Endothelial cell of umbilical vein (primary cell): ENCODE measurements at regions of chr17 and their contacts with region 1.

Region 1: DNA sequence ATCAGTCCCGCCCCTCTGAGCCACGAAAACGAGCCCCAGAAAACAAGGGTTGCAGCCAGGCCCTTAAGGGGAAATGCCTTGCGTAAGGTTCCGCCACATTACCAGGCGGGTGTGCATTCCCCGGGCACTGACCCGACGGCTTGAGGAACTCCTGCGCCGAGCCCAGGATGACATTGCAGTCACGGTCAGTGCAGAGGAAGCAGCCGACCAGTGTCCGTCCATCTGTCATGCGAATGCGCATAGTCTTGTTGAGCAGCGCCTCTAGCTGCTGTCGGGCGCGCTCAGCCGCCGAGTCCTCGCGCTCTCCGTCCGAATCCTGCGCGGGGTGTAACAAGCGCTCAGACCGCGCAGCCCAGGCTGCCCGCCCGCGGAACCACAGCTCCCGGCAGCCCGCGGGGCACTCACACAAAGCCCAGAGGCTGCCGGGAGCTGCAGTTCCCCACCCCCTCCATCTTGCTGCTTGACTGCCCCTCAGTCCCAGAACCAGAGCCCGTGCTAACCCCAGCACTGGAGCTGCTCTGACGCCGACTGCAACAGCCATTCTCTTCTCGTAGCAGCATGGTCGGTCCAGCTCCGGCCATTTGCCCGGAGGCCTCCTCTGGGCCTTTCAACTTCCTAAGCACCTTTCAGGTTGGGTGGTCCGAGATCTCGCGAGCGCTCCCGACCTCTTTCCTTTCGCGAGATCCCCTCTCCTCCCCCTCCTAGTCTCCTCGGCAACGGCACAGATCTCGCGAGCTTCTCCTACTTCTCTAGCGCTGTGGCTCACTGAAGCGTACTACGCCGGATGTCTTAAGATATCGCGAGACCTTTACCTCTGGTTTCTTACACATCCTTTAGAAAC is at the start of gene NAA38:
- DNase-seq: peak; percentile 99
- H3K4me3 ChIP-seq: peak within 1 kb of the TSS; percentile 53 to 78 (median 54)
- H3K27ac ChIP-seq: peak within 1 kb of the TSS; percentile 96
- H3K4me1 ChIP-seq: peaks cover 35% of the 10 kb centered on the region
- H3K27me3 ChIP-seq: no peaks in the 10 kb centered on the region
- CTCF ChIP-seq: peak; percentile 17 to 34
- POLR2A ChIP-seq: peak; percentile 84
- total RNA-seq, gene NAA38: 119 TPM in 2 replicates

Region 2: DNA sequence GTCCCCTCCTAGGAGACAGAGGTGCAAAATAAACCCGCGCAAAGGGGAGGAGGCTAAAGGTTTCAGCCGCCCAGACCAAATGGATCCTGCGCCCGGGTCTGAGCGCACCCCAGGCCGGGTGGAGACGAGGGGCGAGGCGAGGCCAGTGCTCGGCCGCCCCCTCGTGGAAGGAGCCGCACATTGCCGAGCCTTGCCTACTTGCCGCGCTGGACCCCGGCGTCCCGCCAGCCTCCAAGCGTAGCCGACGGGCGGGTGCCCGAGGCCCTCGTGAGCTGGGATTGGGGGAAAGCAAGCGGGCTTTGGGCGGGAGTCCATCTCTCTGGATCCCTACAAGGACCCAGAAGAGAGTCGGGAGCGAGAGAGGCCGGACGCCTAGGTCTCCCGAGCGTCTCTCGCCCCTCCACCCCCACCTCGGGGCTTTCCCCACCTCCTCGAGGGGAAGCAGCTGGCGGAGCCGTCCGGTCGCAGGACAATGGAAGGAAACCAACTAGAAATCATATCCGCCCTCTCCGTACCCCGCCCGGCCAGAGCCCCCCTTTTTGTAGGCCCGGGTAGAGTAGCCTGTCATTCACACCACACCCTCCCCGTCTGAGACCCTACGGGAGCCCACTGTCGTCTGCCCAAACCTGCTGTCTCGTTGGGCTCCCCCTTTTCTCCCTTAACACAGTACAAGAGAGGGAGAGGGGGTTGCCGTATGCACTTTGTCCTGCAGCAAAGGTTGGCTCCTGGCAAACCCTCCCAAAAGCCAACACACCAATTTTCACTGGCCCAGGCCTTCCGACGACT is 834.9 kb before region 1 on chr17:
- CTCF ChIA-PET with region 1: no interaction called
- POLR2A ChIA-PET with region 1: no interaction called
- dilution Hi-C with region 1: no loop called
- intact Hi-C with region 1: loop called (anchors 10 kb)
- DNase-seq: peak; percentile 97
- H3K4me3 ChIP-seq: peak overlapping the region in 2 of 3 experiments; percentile 59 to 90
- H3K27ac ChIP-seq: peak overlapping the region; percentile 96
- H3K4me1 ChIP-seq: peaks cover 58% of the 10 kb centered on the region
- H3K27me3 ChIP-seq: no peaks in the 10 kb centered on the region
- CTCF ChIP-seq: peak; percentile 97 to 99
- POLR2A ChIP-seq: peak; percentile 66

Region 3: GRCh38 chr17:7740481-7741001 is 116.6 kb before region 1 on chr17:
- CTCF ChIA-PET with region 1: interaction called, 6 read pairs
- POLR2A ChIA-PET with region 1: no interaction called
- dilution Hi-C with region 1: no loop called
- intact Hi-C with region 1: loop called (anchors 1 kb)
- DNase-seq: no peak
- H3K4me3 ChIP-seq: no peak overlapping the region
- H3K27ac ChIP-seq: no peak overlapping the region
- H3K4me1 ChIP-seq: peaks cover 7% of the 10 kb centered on the region
- H3K27me3 ChIP-seq: peaks cover 6 to 7% of the 10 kb centered on the region in 2 experiments
- CTCF ChIP-seq: no peak
- POLR2A ChIP-seq: no peak

Region 4: GRCh38 chr17:7844292-7845154 is 12.6 kb before region 1 on chr17:
- CTCF ChIA-PET with region 1: interaction called, 7 read pairs
- POLR2A ChIA-PET with region 1: interaction called, 12 read pairs
- dilution Hi-C with region 1: no loop called
- intact Hi-C with region 1: loop called (anchors 1 kb)
- DNase-seq: peak; percentile 92
- H3K4me3 ChIP-seq: peak overlapping the region; percentile 45 to 71 (median 60)
- H3K27ac ChIP-seq: peak overlapping the region; percentile 99
- H3K4me1 ChIP-seq: peaks cover 14% of the 10 kb centered on the region
- H3K27me3 ChIP-seq: no peaks in the 10 kb centered on the region
- CTCF ChIP-seq: no peak
- POLR2A ChIP-seq: peak; percentile 52

Region 5: GRCh38 chr17:7931709-7932482 is 74.8 kb after region 1 on chr17 and contains the starts of genes CNTROB and TRAPPC1:
- CTCF ChIA-PET with region 1: interaction called, 7 read pairs
- POLR2A ChIA-PET with region 1: no interaction called
- dilution Hi-C with region 1: no loop called
- intact Hi-C with region 1: loop called (anchors 1 kb)
- DNase-seq: peak; percentile 99
- H3K4me3 ChIP-seq: peak within 1 kb of the TSS; percentile 74 to 98 (median 96)
- H3K27ac ChIP-seq: peak within 1 kb of the TSS; percentile 66
- H3K4me1 ChIP-seq: peaks cover 23% of the 10 kb centered on the region
- H3K27me3 ChIP-seq: no peaks in the 10 kb centered on the region
- CTCF ChIP-seq: no peak
- POLR2A ChIP-seq: no peak
- total RNA-seq, gene CNTROB: 45.0 and 47.2 TPM in 2 replicates
- total RNA-seq, gene TRAPPC1: 139 and 146 TPM in 2 replicates

Region 6: GRCh38 chr17:8004899-8005298 is 147.8 kb after region 1 on chr17:
- CTCF ChIA-PET with region 1: no interaction called
- POLR2A ChIA-PET with region 1: no interaction called
- dilution Hi-C with region 1: no loop called
- intact Hi-C with region 1: no loop called
- DNase-seq: no peak
- H3K4me3 ChIP-seq: no peak overlapping the region
- H3K27ac ChIP-seq: no peak overlapping the region
- H3K4me1 ChIP-seq: no peaks in the 10 kb centered on the region
- H3K27me3 ChIP-seq: peaks cover 46 to 52% of the 10 kb centered on the region in 2 experiments
- CTCF ChIP-seq: no peak
- POLR2A ChIP-seq: no peak